ENCODE measurements at regions of chr3 and their contacts with region 1.

Region 1: DNA sequence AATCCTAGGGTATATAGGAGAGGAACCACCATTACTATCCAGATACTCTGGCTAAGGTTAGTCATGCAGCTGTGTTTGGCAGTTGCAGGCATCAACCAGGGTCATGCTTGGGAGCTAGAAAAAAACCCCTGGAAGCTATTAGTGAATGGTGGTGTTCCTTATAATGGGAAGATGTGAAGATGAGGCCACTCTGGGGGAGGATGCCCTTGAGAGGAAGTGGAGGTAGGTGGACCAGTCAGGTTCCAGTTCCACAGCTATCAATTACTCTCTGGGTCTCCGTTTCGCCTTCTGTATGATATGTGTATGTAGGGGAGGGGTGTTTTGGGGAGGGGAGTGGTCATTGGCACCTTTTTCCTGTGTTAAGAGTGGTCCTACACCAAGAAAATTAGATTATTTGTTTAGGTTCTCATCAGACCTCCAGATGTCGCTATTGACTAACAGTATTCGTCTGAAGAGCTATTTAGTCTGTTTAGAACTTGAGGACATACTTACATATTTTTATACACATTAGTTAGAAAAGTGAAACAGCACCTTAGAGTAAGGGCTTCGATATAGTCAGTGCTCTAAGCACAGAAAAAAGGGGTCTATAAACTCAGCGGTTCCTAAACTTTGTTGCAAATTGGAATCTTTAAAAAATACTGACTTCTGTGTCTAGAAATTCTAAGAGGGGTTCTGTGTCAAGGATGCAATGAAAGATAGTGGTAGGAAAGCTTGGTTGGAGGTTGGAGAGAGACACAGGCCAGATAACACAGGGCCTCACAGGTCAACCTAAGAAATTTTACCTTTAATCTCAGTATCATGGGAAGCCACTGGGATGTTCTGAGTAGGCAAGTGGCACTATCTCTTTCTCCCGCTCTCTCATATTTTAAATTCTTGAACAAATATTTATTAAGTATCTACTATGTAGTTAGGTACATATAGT is 9.1 kb upstream of the HPS3 start:
- DNase-seq: peak in 2 of 5 donors; percentile 39 to 51
- H3K4me3 ChIP-seq: no peak overlapping the region
- H3K4me3 Mint-ChIP-seq: no peak overlapping the region
- H3K27ac ChIP-seq: no peak overlapping the region
- H3K27ac Mint-ChIP-seq: no peak overlapping the region
- H3K4me1 ChIP-seq: no peaks in the 10 kb centered on the region
- H3K4me1 Mint-ChIP-seq: peaks cover 4 to 5% (median 4%) of the 10 kb centered on the region in 3 donors
- H3K27me3 ChIP-seq: no peaks in the 10 kb centered on the region
- H3K27me3 Mint-ChIP-seq: peaks cover 0 to 9% of the 10 kb centered on the region in 2 donors

Region 2: GRCh38 chr3:149152420-149152819 is 32.1 kb after region 1 on chr3:
- CTCF ChIA-PET with region 1: no interaction called
- POLR2A ChIA-PET with region 1: no interaction called
- DNase-seq: no peak
- H3K4me3 ChIP-seq: no peak overlapping the region
- H3K4me3 Mint-ChIP-seq: no peak overlapping the region
- H3K27ac ChIP-seq: peak overlapping the region; percentile 9
- H3K27ac Mint-ChIP-seq: peak overlapping the region in 7 of 8 donors; percentile 39 to 86 (median 71)
- H3K4me1 ChIP-seq: peaks cover 10% of the 10 kb centered on the region
- H3K4me1 Mint-ChIP-seq: peaks cover 21 to 33% (median 23%) of the 10 kb centered on the region in 3 donors
- H3K27me3 ChIP-seq: no peaks in the 10 kb centered on the region
- H3K27me3 Mint-ChIP-seq: no peaks in the 10 kb centered on the region

Region 3: DNA sequence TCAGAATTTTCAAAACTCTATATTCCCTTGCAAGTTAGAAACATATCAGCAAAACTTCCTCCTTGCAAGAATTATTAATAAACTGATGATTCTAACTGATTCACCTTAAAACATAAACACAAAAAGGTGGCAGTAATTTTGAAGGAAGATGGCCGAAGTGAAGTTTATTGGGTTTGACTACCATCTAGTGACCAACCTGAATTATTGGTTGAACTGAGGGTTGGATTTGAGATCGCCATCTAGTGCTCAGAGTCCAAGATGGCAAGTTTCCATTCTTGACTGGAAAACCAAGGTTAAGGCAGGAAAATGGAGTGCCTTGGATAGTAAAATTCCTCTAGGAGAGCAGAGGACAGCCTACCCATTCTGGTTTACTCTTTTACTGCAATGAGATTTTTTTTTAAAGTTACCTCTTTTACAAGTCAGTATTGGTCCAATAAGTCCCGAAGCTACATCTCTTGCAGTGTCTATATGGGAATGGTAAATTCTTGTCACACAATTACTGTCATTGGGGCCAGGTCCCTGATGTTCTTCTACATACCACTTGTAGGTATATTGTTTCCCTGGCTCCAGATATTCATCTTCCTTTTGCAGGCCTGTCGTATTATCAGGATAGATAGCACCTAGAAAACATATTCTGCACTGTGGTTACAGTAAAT is 152.9 kb after region 1 on chr3:
- CTCF ChIA-PET with region 1: interaction called, 32 read pairs
- POLR2A ChIA-PET with region 1: no interaction called
- DNase-seq: peak in 3 of 5 donors; percentile 13 to 60 (median 53)
- H3K4me3 ChIP-seq: no peak overlapping the region
- H3K4me3 Mint-ChIP-seq: no peak overlapping the region
- H3K27ac ChIP-seq: no peak overlapping the region
- H3K27ac Mint-ChIP-seq: peak overlapping the region in 1 of 8 donors; percentile 86
- H3K4me1 ChIP-seq: peaks cover 15% of the 10 kb centered on the region
- H3K4me1 Mint-ChIP-seq: peaks cover 15 to 23% (median 16%) of the 10 kb centered on the region in 3 donors
- H3K27me3 ChIP-seq: no peaks in the 10 kb centered on the region
- H3K27me3 Mint-ChIP-seq: no peaks in the 10 kb centered on the region